ENCODE measurements at regions of chr16 and their contacts with region 1.

Region 1: DNA sequence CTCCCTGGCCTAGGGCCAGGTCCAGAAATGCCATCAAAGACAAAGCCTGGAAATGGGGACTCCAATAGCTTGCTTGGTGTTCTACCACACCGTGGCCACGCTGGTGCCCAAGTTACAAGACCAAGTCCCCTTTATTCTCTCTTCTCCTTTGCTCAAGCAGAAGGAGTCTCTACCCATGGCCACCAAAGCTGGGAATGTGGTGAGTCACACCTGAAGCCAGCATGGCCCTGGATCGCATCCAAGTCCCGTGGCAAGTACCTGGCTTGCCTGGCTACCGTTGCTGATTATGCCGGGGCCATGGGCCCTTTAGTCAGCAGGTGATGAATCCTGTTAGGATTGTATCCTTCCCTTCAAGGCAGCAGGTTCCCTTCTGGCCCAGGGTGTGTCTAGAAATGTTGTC is 260.0 kb downstream of the HAPSTR1 start:
- DNase-seq: peak in 1 of 2 experiments; percentile 16
- H3K4me3 ChIP-seq: no peak overlapping the region
- H3K27ac ChIP-seq: no peak overlapping the region
- H3K4me1 ChIP-seq: no peaks in the 10 kb centered on the region
- H3K27me3 ChIP-seq: peaks cover 24% of the 10 kb centered on the region
- CTCF ChIP-seq: no peak

Region 2: GRCh38 chr16:10485698-10486382 is 1134.4 kb after region 1 on chr16:
- CTCF ChIA-PET with region 1: no interaction called
- POLR2A ChIA-PET with region 1: interaction called, 15 read pairs
- intact Hi-C with region 1: no loop called
- DNase-seq: peak in 1 of 2 experiments; percentile 40
- H3K4me3 ChIP-seq: no peak overlapping the region
- H3K27ac ChIP-seq: no peak overlapping the region
- H3K4me1 ChIP-seq: no peaks in the 10 kb centered on the region
- H3K27me3 ChIP-seq: no peaks in the 10 kb centered on the region
- CTCF ChIP-seq: no peak